GM12878 (cell line): ENCODE measurements at regions of chr2 and their contacts with region 1.

Region 1: DNA sequence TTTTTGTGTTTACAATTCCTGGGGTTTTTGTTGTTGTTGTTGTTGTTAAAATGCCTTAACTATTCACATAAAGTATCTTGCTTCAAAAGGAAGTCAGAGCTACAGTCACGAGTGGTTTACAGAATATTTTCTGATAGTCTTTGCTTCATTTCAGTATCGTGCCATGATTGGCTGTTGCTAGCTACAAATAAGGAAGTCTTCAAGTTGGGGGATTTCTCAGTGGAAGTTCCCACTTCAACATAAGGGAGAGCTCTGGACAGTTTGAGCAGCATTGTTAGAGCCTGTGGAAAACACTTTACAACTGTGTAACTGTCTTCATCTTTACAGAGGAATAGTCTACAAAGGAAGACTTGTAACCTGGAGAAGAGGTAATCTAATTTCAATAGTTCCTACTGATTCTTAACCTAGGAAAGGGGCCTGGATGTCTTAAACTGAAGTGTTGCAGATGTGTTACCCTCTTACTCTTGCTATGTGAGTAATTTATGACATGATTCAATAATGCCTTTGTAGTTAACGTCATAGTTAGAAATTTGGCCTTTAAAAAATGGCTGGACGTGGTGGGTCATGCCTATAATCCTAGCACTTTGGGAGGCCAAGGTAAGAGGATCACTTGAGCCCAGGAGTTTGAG is 23.4 kb upstream of the TANK start:
- DNase-seq: peak; percentile 87
- ATAC-seq: peak; percentile 80
- H3K4me3 ChIP-seq: peak overlapping the region; percentile 81
- H3K27ac ChIP-seq: peak overlapping the region; percentile 95
- H3K4me1 ChIP-seq: no peaks in the 10 kb centered on the region
- H3K27me3 ChIP-seq: no peaks in the 10 kb centered on the region
- CTCF ChIP-seq: no peak
- EP300 ChIP-seq: no peak; a peak in 1 of 4 replicates
- POLR2A ChIP-seq: peak; percentile 56
- RAD21 ChIP-seq: no peak

Region 2: DNA sequence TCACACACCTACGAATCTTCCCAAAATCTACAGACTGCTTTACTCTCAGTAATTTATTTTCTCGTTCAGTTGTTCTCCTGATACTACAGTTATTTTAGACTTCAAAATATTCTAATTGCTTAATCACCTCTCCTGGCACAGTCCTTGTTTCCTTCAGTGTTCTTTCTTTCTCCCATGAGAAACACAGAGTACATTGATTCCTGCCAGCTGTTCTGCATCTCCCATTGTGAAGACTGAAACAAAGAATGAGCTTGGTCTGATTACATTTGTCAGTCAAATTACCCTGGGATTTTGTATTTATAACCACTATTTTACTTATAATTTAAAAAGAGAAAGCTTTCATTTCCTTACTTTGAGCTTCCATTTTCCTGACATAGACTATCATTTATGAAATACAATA is 40.5 kb before region 1 on chr2:
- CTCF ChIA-PET with region 1: interaction called, 3 read pairs
- POLR2A ChIA-PET with region 1: interaction called, 6 read pairs
- RAD21 ChIA-PET with region 1: interaction called, 27 read pairs
- SMC1A ChIA-PET with region 1: interaction called, 130 read pairs
- in situ Hi-C with region 1: no loop called
- intact Hi-C with region 1: no loop called
- DNase-seq: no peak
- ATAC-seq: no peak; the same call in 2 of the 3 replicates
- H3K4me3 ChIP-seq: no peak overlapping the region
- H3K27ac ChIP-seq: no peak overlapping the region
- H3K4me1 ChIP-seq: peaks cover 6% of the 10 kb centered on the region
- H3K27me3 ChIP-seq: no peaks in the 10 kb centered on the region
- CTCF ChIP-seq: no peak
- EP300 ChIP-seq: no peak
- POLR2A ChIP-seq: no peak
- RAD21 ChIP-seq: no peak

Region 3: DNA sequence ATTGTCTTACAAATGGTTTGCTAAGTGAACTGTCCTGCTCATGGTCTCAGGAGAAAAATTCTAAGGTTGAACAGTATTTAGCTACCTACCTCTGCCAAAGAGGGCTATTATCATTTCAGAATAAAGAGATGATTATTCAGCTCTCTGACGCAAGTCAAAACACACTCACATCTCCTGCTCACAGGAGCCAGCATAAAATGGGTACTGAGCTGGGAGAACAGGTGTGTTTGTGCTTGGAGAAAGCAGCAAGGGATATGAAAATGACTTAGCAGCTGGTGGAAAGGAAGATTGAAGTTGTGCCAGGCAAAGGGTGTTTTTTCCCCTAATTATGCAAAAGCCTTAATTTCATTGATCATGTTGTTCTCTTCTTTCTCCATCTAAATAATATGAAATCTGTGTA is 23.9 kb before region 1 on chr2:
- CTCF ChIA-PET with region 1: interaction called, 5 read pairs
- POLR2A ChIA-PET with region 1: interaction called, 13 read pairs
- RAD21 ChIA-PET with region 1: interaction called, 71 read pairs
- SMC1A ChIA-PET with region 1: interaction called, 130 read pairs
- in situ Hi-C with region 1: no loop called
- intact Hi-C with region 1: no loop called
- DNase-seq: no peak
- ATAC-seq: no peak
- H3K4me3 ChIP-seq: no peak overlapping the region
- H3K27ac ChIP-seq: no peak overlapping the region
- H3K4me1 ChIP-seq: no peaks in the 10 kb centered on the region
- H3K27me3 ChIP-seq: no peaks in the 10 kb centered on the region
- CTCF ChIP-seq: no peak
- EP300 ChIP-seq: no peak
- POLR2A ChIP-seq: no peak
- RAD21 ChIP-seq: no peak

Region 4: GRCh38 chr2:161160226-161161069 is 23.6 kb after region 1 on chr2 and contains the start of gene TANK:
- CTCF ChIA-PET with region 1: interaction called, 3 read pairs
- POLR2A ChIA-PET with region 1: interaction called, 7 read pairs
- RAD21 ChIA-PET with region 1: interaction called, 9 read pairs
- SMC1A ChIA-PET with region 1: interaction called, 27 read pairs
- in situ Hi-C with region 1: no loop called
- intact Hi-C with region 1: loop called (anchors 1 kb)
- DNase-seq: peak; percentile 83
- ATAC-seq: peak; percentile 90
- H3K4me3 ChIP-seq: peak within 1 kb of the TSS; percentile 93
- H3K27ac ChIP-seq: peak within 1 kb of the TSS; percentile 89
- H3K4me1 ChIP-seq: peaks cover 25% of the 10 kb centered on the region
- H3K27me3 ChIP-seq: no peaks in the 10 kb centered on the region
- CTCF ChIP-seq: no peak
- EP300 ChIP-seq: no peak
- POLR2A ChIP-seq: peak; percentile 96
- RAD21 ChIP-seq: no peak
- polyA plus RNA-seq, gene TANK: 102 to 127 TPM

Region 5: GRCh38 chr2:161172901-161173540 is 36.2 kb after region 1 on chr2:
- CTCF ChIA-PET with region 1: interaction called, 11 read pairs
- POLR2A ChIA-PET with region 1: interaction called, 9 read pairs
- RAD21 ChIA-PET with region 1: interaction called, 10 read pairs
- SMC1A ChIA-PET with region 1: interaction called, 27 read pairs
- in situ Hi-C with region 1: no loop called
- intact Hi-C with region 1: loop called (anchors 5 kb)
- DNase-seq: no peak
- ATAC-seq: peak; percentile 70
- H3K4me3 ChIP-seq: peak overlapping the region; percentile 36; the same call in 1 of the 2 replicates
- H3K27ac ChIP-seq: peak overlapping the region; percentile 36
- H3K4me1 ChIP-seq: peaks cover 52% of the 10 kb centered on the region
- H3K27me3 ChIP-seq: no peaks in the 10 kb centered on the region
- CTCF ChIP-seq: no peak
- EP300 ChIP-seq: peak; percentile 8 to 35; a peak in 2 of 4 replicates
- POLR2A ChIP-seq: no peak
- RAD21 ChIP-seq: no peak